T-cell (primary cell): ENCODE measurements at regions of chr10 and their contacts with region 1.

Region 1: DNA sequence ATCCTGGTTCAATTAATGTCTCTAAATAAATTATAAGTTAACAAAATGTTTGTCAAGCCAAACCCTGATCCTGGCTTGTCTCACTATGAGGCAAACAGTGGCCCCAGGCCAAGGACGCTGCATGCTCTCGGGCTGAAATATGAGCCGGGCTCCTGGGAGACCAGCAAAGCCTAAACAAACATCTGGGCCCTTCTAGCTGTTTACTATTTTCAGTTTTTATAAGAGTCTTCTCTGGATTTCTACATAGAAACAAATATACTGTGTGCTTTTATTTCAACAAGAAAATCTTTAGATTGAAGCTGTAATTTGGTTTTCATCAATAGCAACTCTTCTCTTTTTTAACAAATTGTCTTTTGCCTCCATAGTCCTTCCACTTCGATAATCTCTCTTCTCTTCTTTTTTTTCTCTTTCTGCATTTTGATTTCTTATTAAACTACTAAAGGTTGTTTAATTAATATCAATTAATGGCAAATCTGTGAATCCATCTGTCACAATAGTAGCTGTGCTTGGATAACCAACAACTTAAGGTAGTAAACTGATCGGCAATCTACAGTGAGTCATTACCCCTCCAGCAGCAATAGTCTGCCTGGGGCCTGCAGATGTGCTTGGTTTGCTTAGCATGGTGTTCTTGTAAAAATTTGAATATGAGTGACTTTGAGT is 83.3 kb upstream of the DNAJC1 start:
- DNase-seq: no peak
- ATAC-seq: no peak
- H3K4me3 ChIP-seq: no peak overlapping the region
- H3K4me3 Mint-ChIP-seq: no peak overlapping the region
- H3K27ac ChIP-seq: no peak overlapping the region
- H3K27ac Mint-ChIP-seq: no peak overlapping the region
- H3K4me1 ChIP-seq: no peaks in the 10 kb centered on the region
- H3K4me1 Mint-ChIP-seq: no peaks in the 10 kb centered on the region
- H3K27me3 ChIP-seq: peaks cover 0 to 14% of the 10 kb centered on the region in 2 experiments
- H3K27me3 Mint-ChIP-seq: peaks cover 35 to 46% of the 10 kb centered on the region in 2 donors

Region 2: DNA sequence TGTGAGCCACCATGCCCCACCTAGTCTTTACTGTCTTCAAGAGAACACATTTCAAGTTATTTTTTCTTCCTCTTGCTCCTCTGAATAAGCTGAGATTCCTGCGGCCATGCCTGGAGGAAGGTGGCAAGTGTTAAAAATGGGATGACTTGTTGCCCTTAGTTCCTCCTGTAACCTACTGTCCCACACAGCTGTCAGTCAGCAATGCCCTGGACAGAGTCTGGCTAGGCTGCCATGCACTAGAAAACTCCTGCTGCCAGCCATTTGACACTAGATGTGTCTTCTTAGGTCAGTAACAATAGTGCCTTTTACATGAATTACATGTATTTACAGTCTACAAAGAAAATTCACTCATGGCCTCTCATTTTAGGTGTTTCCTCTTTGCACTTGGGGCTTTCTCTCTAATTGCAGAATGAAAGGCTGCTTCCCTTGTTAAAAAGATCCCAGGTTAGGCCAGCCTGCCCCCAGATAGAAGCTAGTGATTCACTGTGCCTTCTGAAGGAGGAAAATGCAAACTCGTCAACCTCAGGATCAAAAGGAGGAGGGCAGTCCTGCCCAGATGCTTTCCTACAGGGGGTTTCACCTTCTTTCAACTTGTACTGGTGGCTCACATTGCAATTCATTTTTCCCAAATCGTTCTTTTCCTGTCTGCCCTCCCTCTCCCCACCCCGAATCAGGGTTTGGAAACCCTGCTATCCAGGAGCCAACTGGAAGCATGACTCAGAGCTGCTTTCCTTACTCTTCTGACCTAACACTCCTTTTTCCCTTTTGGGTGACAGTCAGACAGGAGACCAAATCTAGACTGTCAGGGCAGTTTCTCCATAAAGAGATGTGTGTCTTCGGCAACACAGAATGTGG is 395.1 kb after region 1 on chr10:
- CTCF ChIA-PET with region 1: no interaction called
- POLR2A ChIA-PET with region 1: no interaction called
- DNase-seq: no peak
- ATAC-seq: no peak
- H3K4me3 ChIP-seq: no peak overlapping the region
- H3K4me3 Mint-ChIP-seq: no peak overlapping the region
- H3K27ac ChIP-seq: no peak overlapping the region
- H3K27ac Mint-ChIP-seq: no peak overlapping the region
- H3K4me1 ChIP-seq: peaks cover 0 to 7% of the 10 kb centered on the region in 2 experiments
- H3K4me1 Mint-ChIP-seq: peaks cover 7 to 17% (median 16%) of the 10 kb centered on the region in 3 donors
- H3K27me3 ChIP-seq: peaks cover 0 to 21% of the 10 kb centered on the region in 2 experiments
- H3K27me3 Mint-ChIP-seq: peaks cover 16 to 27% of the 10 kb centered on the region in 2 donors

Region 3: DNA sequence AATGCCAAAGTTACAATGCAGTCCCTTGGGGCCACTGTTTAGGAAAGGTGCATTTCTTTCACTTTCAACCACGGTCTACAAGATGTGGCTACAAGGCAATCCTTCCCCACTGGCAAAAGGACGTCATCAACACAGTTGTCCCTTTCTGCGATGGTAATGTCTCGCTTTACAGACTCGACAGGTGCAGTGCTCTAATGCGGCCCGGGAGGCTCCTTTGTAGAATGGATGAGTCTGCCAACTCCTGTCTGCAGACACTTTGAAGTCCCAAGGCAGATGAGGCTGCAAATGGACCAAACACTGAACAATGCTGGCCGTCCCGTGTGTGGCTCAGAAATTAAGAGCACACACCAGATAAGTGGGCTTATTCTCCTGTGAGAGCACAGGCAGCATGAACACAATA is 493.9 kb after region 1 on chr10:
- CTCF ChIA-PET with region 1: no interaction called
- POLR2A ChIA-PET with region 1: interaction called in 1 of 2 experiments, 25 read pairs
- DNase-seq: no peak
- ATAC-seq: no peak
- H3K4me3 ChIP-seq: no peak overlapping the region
- H3K4me3 Mint-ChIP-seq: no peak overlapping the region
- H3K27ac ChIP-seq: no peak overlapping the region
- H3K27ac Mint-ChIP-seq: peak overlapping the region in 1 of 2 donors; percentile 76
- H3K4me1 ChIP-seq: peaks cover 0 to 13% of the 10 kb centered on the region in 2 experiments
- H3K4me1 Mint-ChIP-seq: peaks cover 53 to 73% (median 66%) of the 10 kb centered on the region in 3 donors
- H3K27me3 ChIP-seq: no peaks in the 10 kb centered on the region
- H3K27me3 Mint-ChIP-seq: no peaks in the 10 kb centered on the region